ENCODE measurements at regions of chr12 and their contacts with region 1.

Region 1: DNA sequence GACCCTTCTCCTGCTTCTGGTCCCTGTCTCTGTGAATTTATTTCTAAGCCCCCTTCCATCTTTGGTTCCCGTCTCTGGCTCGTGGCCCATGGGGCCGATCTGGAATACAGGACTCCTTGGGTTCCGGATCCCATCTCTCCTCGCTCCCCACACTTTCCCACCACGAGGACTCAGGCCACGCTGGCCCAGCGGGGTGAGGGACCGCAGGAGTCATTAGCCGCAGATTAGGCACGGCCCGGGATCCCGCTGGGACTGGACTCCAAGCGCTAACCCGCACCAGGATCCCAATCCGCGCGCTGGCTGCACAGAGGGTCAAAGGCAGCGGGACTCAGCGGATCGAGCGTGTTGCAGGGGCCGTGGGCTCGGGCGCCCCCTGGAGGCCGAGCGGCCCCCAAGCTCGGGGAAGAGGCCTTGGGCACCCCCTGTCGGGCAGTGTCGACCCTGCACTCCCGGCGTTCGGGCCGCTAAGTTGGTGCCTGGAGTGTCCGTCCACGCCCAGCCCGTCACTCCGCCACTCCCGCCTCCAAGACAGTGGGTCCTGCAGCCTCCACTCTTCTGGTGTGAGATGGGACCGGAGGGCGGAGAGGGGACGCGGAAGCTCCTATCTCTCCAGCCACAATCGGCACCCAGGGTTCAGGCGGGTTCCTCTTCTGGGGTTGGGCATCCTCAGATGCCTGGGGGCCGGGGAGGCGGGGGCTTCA is 9.5 kb downstream of the SHMT2 start:
- DNase-seq: peak in 1 of 2 donors; percentile 94
- H3K4me3 ChIP-seq: peak overlapping the region; percentile 45 to 62
- H3K27ac ChIP-seq: peak overlapping the region in 1 of 2 donors; percentile 50
- H3K4me1 ChIP-seq: peaks cover 31 to 52% of the 10 kb centered on the region in 2 donors
- H3K27me3 ChIP-seq: peaks cover 28% of the 10 kb centered on the region
- CTCF ChIP-seq: peak; percentile 100

Region 2: GRCh38 chr12:56751712-56752598 is 487.0 kb before region 1 on chr12 and contains the start of gene PRIM1:
- intact Hi-C with region 1: loop called (anchors 5 kb)
- DNase-seq: peak; percentile 18 to 90
- H3K4me3 ChIP-seq: peak within 1 kb of the TSS; percentile 74 to 80
- H3K27ac ChIP-seq: no peak within 1 kb of the TSS
- H3K4me1 ChIP-seq: no peaks in the 10 kb centered on the region
- H3K27me3 ChIP-seq: no peaks in the 10 kb centered on the region
- CTCF ChIP-seq: peak in 2 of 3 experiments; percentile 14 to 22
- total RNA-seq, gene PRIM1: 20.9 TPM

Region 3: DNA sequence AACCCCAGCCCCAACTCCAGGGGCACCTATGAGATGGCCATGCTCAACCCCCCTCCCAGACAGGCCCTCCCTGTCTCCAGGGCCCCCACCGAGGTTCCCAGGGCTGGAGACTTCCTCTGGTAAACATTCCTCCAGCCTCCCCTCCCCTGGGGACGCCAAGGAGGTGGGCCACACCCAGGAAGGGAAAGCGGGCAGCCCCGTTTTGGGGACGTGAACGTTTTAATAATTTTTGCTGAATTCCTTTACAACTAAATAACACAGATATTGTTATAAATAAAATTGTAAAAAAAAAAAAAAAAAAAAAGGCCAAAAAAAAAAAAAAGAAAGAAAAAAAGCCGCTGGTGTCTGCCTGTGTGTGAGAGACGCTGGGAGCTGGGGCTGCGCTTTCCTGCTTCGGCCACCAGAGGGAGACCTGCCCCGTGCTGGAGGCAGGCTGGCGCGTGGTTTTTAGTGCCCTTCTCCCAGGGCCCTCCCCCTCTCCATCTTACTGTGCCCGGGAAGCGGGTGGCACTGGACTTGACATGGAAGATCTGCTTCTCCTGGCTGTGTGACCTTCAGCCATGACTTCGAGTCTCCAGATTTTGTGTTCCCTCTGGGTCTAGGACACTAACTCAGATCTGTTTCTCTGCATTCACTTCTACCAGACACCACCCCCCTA is 25.8 kb before region 1 on chr12:
- intact Hi-C with region 1: loop called (anchors 1 kb)
- DNase-seq: peak; percentile 62 to 96
- H3K4me3 ChIP-seq: no peak overlapping the region
- H3K27ac ChIP-seq: peak overlapping the region; percentile 68 to 76
- H3K4me1 ChIP-seq: peaks cover 13 to 35% of the 10 kb centered on the region in 2 donors
- H3K27me3 ChIP-seq: no peaks in the 10 kb centered on the region
- CTCF ChIP-seq: peak; percentile 89 to 95 (median 92)